ENCODE measurements at regions of chr6 and their contacts with region 1.

Region 1: DNA sequence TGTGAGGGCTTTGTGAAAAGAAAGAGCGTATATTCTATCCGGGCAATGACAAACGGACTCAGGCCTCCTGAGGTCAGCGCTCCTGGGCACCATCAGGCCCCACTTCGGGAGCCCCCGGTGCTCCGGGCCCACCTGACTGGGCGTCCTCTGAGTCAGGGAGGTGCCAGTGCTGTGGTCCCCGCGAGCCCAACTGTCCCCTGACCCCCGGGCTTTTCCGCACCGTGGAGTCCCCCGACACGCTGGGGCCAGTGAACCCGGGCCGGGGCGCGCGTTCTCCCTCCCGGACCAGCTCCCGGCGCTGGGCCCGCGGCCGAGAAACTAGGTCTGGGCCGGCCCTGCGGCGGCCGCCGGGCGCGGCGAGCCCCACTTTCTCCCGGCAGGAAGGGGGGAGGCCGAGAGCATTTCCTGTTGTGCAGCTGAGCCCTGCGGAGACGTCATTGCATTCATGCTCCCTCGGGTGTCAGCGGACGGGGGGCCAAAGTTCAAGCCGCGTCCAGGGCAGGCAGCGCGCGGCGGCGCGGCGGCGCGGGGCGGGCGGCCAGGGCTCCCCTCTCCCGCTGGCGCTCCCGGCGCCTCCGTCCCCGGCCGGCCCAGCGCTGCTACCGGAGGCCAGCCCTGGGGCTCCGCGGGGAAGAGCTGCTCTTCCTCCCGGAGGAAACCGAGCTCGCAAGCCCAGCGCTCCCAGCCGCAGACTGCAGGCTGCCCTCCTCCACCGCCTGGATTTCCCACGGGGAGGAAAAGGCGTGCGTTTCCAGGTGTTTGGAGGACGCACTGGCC is 18.3 kb downstream of the HIVEP2 start:
- DNase-seq: peak; percentile 64 to 94 (median 74)
- ATAC-seq: peak; percentile 78
- H3K4me3 ChIP-seq: peak overlapping the region; percentile 85
- H3K4me3 Mint-ChIP-seq: peak overlapping the region; percentile 95
- H3K27ac ChIP-seq: peak overlapping the region; percentile 98 to 99
- H3K27ac Mint-ChIP-seq: peak overlapping the region; percentile 95
- H3K4me1 ChIP-seq: peaks cover 9% of the 10 kb centered on the region
- H3K4me1 Mint-ChIP-seq: peaks cover 66% of the 10 kb centered on the region
- H3K27me3 ChIP-seq: no peaks in the 10 kb centered on the region
- H3K27me3 Mint-ChIP-seq: no peaks in the 10 kb centered on the region
- CTCF ChIP-seq: no peak

Region 2: DNA sequence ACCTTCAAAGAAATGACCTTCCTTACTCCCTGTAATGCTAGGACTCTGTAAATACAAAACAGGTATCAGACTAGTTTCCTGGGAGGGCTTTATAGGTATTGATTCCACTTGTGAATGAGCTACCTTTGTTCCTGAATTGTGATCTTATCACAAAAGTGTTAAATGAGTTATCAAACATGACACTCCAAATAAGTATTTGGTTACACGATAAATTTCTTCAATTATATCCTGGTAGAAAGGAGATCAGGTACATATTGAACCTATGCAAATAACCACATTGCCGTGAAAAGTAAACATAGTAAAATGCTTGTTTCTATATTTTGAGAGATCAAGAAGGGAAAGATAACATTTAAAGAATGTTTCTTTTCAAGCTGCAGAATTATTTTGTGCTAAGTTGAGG is 267.0 kb before region 1 on chr6:
- CTCF ChIA-PET with region 1: no interaction called
- POLR2A ChIA-PET with region 1: no interaction called
- intact Hi-C with region 1: no loop called
- DNase-seq: no peak
- ATAC-seq: no peak
- H3K4me3 ChIP-seq: no peak overlapping the region
- H3K4me3 Mint-ChIP-seq: no peak overlapping the region
- H3K27ac ChIP-seq: no peak overlapping the region
- H3K27ac Mint-ChIP-seq: no peak overlapping the region
- H3K4me1 ChIP-seq: no peaks in the 10 kb centered on the region
- H3K4me1 Mint-ChIP-seq: no peaks in the 10 kb centered on the region
- H3K27me3 ChIP-seq: no peaks in the 10 kb centered on the region
- H3K27me3 Mint-ChIP-seq: no peaks in the 10 kb centered on the region
- CTCF ChIP-seq: no peak

Region 3: GRCh38 chr6:142746524-142746923 is 180.2 kb before region 1 on chr6:
- CTCF ChIA-PET with region 1: no interaction called
- POLR2A ChIA-PET with region 1: interaction called, 10 read pairs
- intact Hi-C with region 1: no loop called
- DNase-seq: peak in 11 of 14 experiments; percentile 7 to 67 (median 15)
- ATAC-seq: peak; percentile 55
- H3K4me3 ChIP-seq: no peak overlapping the region
- H3K4me3 Mint-ChIP-seq: no peak overlapping the region
- H3K27ac ChIP-seq: no peak overlapping the region
- H3K27ac Mint-ChIP-seq: no peak overlapping the region
- H3K4me1 ChIP-seq: peaks cover 6% of the 10 kb centered on the region
- H3K4me1 Mint-ChIP-seq: peaks cover 28% of the 10 kb centered on the region
- H3K27me3 ChIP-seq: no peaks in the 10 kb centered on the region
- H3K27me3 Mint-ChIP-seq: no peaks in the 10 kb centered on the region
- CTCF ChIP-seq: peak; percentile 56

Region 4: GRCh38 chr6:142845624-142846458 is 80.8 kb before region 1 on chr6:
- CTCF ChIA-PET with region 1: no interaction called
- POLR2A ChIA-PET with region 1: interaction called, 58 read pairs
- intact Hi-C with region 1: loop called in 1 of 2 experiments (anchors 5 kb)
- DNase-seq: peak; percentile 48 to 84 (median 66)
- ATAC-seq: peak; percentile 50
- H3K4me3 ChIP-seq: peak overlapping the region; percentile 53
- H3K4me3 Mint-ChIP-seq: peak overlapping the region; percentile 85
- H3K27ac ChIP-seq: peak overlapping the region; percentile 88 to 93
- H3K27ac Mint-ChIP-seq: peak overlapping the region; percentile 94
- H3K4me1 ChIP-seq: peaks cover 49% of the 10 kb centered on the region
- H3K4me1 Mint-ChIP-seq: peaks cover 97% of the 10 kb centered on the region
- H3K27me3 ChIP-seq: no peaks in the 10 kb centered on the region
- H3K27me3 Mint-ChIP-seq: no peaks in the 10 kb centered on the region
- CTCF ChIP-seq: no peak

Region 5: DNA sequence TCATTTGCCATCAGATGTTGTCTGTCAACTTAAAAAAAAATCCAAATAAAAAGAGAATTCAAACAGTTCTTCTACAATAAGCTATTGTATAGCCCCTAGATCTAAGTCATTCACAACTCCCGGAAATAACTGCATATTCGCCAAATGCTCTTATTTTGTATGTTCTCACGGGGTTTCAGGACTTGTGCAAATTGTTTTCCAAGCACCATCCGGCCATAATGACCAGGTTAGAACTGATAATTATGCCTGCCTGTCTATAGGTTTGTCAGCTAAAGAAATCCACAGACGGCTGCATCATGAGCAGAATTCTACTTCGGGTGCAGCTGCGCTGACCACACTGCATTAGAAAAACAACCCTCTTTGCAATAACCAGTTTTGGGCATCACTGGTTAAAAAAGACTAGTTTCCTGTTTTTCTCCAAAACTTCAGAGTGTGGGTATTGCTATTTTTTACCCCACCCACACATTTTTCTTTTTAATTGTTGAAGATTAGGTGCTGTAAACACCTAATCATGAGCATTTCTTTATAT is 69.4 kb before region 1 on chr6:
- CTCF ChIA-PET with region 1: no interaction called
- POLR2A ChIA-PET with region 1: interaction called, 129 read pairs
- intact Hi-C with region 1: loop called in 1 of 2 experiments (anchors 5 kb)
- DNase-seq: peak in 11 of 14 experiments; percentile 25 to 65 (median 37)
- ATAC-seq: peak; percentile 40
- H3K4me3 ChIP-seq: peak overlapping the region; percentile 46
- H3K4me3 Mint-ChIP-seq: peak overlapping the region; percentile 82
- H3K27ac ChIP-seq: peak overlapping the region; percentile 88 to 99
- H3K27ac Mint-ChIP-seq: peak overlapping the region; percentile 94
- H3K4me1 ChIP-seq: peaks cover 69% of the 10 kb centered on the region
- H3K4me1 Mint-ChIP-seq: peaks cover 93% of the 10 kb centered on the region
- H3K27me3 ChIP-seq: no peaks in the 10 kb centered on the region
- H3K27me3 Mint-ChIP-seq: no peaks in the 10 kb centered on the region
- CTCF ChIP-seq: no peak

Region 6: GRCh38 chr6:142902636-142903053 is 24.0 kb before region 1 on chr6:
- CTCF ChIA-PET with region 1: no interaction called
- POLR2A ChIA-PET with region 1: interaction called, 201 read pairs
- intact Hi-C with region 1: loop called in 1 of 2 experiments (anchors 1 kb)
- DNase-seq: peak; percentile 55 to 95 (median 70)
- ATAC-seq: peak; percentile 57
- H3K4me3 ChIP-seq: peak overlapping the region; percentile 62
- H3K4me3 Mint-ChIP-seq: peak overlapping the region; percentile 81
- H3K27ac ChIP-seq: peak overlapping the region; percentile 86 to 93
- H3K27ac Mint-ChIP-seq: no peak overlapping the region
- H3K4me1 ChIP-seq: peaks cover 40% of the 10 kb centered on the region
- H3K4me1 Mint-ChIP-seq: peaks cover 26% of the 10 kb centered on the region
- H3K27me3 ChIP-seq: no peaks in the 10 kb centered on the region
- H3K27me3 Mint-ChIP-seq: no peaks in the 10 kb centered on the region
- CTCF ChIP-seq: no peak

Region 7: DNA sequence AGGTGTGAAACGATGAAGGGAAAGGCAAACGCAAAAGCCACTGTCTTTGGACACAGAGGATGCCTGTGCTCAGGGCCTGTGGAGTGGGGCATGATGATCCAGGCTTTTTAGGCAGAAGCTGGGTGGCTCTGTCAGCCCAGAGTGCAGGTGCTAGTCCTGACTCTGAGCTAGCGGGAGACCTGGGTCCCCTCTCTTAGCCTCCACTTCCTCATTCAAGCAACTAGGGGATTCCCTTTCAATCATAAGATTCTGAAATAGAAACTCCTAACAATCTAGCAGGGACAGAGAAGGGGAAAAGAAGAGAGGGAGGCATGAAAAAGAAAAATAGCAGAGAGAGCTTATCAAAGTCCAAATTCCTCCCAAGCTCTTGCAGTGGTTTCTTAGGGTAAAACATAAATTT is 25.9 kb after region 1 on chr6:
- CTCF ChIA-PET with region 1: no interaction called
- POLR2A ChIA-PET with region 1: interaction called, 11 read pairs
- intact Hi-C with region 1: no loop called
- DNase-seq: peak in 1 of 14 experiments; percentile 46
- ATAC-seq: no peak
- H3K4me3 ChIP-seq: no peak overlapping the region
- H3K4me3 Mint-ChIP-seq: no peak overlapping the region
- H3K27ac ChIP-seq: no peak overlapping the region
- H3K27ac Mint-ChIP-seq: peak overlapping the region; percentile 98
- H3K4me1 ChIP-seq: no peaks in the 10 kb centered on the region
- H3K4me1 Mint-ChIP-seq: peaks cover 30% of the 10 kb centered on the region
- H3K27me3 ChIP-seq: no peaks in the 10 kb centered on the region
- H3K27me3 Mint-ChIP-seq: no peaks in the 10 kb centered on the region
- CTCF ChIP-seq: no peak